ENCODE measurements at regions of chr4 and their contacts with region 1.

Region 1: GRCh38 chr4:77240469-77241066 is 83.6 kb downstream of the CCNG2 start:
- DNase-seq: peak; percentile 51
- ATAC-seq: peak; percentile 98
- H3K4me3 ChIP-seq: no peak overlapping the region
- H3K27ac ChIP-seq: no peak overlapping the region
- H3K4me1 ChIP-seq: no peaks in the 10 kb centered on the region
- H3K27me3 ChIP-seq: peaks cover 51% of the 10 kb centered on the region
- CTCF ChIP-seq: peak; percentile 81 to 95 (median 85)
- POLR2A ChIP-seq: no peak
- RAD21 ChIP-seq: peak; percentile 88

Region 2: DNA sequence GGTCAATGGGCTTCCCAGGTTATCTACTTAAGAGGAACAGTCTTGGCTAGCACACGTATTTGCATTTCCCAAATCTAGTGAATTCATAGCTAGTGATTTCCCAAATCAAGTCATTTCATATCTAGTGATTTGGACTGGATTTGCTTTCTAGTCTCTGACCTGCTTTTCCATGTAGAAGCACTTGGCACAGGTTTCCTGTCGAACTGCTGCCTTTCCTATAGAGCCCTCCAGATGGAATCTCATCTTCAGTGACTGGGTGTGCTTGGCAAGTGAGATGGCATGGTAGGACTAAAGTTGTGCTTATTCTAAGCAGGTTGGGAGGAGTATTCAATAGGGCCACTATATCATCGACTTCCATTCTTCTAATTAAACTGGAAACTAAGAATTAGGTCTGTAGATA is 11.2 kb after region 1 on chr4:
- CTCF ChIA-PET with region 1: no interaction called
- POLR2A ChIA-PET with region 1: no interaction called
- RAD21 ChIA-PET with region 1: no interaction called
- intact Hi-C with region 1: no loop called
- DNase-seq: no peak
- ATAC-seq: no peak
- H3K4me3 ChIP-seq: no peak overlapping the region
- H3K27ac ChIP-seq: no peak overlapping the region
- H3K4me1 ChIP-seq: no peaks in the 10 kb centered on the region
- H3K27me3 ChIP-seq: peaks cover 26% of the 10 kb centered on the region; the same call in 1 of the 2 replicates
- CTCF ChIP-seq: no peak
- POLR2A ChIP-seq: no peak
- RAD21 ChIP-seq: no peak

Region 3: GRCh38 chr4:77308843-77309242 is 68.3 kb after region 1 on chr4:
- CTCF ChIA-PET with region 1: interaction called, 5 read pairs
- POLR2A ChIA-PET with region 1: no interaction called
- RAD21 ChIA-PET with region 1: interaction called in 1 of 2 experiments, 6 read pairs
- intact Hi-C with region 1: loop called (anchors 1 kb)
- DNase-seq: peak; percentile 10
- ATAC-seq: peak; percentile 97
- H3K4me3 ChIP-seq: no peak overlapping the region
- H3K27ac ChIP-seq: no peak overlapping the region
- H3K4me1 ChIP-seq: no peaks in the 10 kb centered on the region
- H3K27me3 ChIP-seq: peaks cover 23% of the 10 kb centered on the region
- CTCF ChIP-seq: peak; percentile 53 to 62 (median 56); a peak in 4 of 6 replicates
- POLR2A ChIP-seq: no peak
- RAD21 ChIP-seq: peak; percentile 74

Region 4: GRCh38 chr4:77358315-77358928 is 117.9 kb after region 1 on chr4:
- CTCF ChIA-PET with region 1: interaction called, 14 read pairs
- POLR2A ChIA-PET with region 1: no interaction called
- RAD21 ChIA-PET with region 1: interaction called in 1 of 2 experiments, 7 read pairs
- intact Hi-C with region 1: loop called (anchors 1 kb)
- DNase-seq: peak; percentile 16
- ATAC-seq: peak; percentile 79
- H3K4me3 ChIP-seq: no peak overlapping the region
- H3K27ac ChIP-seq: no peak overlapping the region
- H3K4me1 ChIP-seq: no peaks in the 10 kb centered on the region
- H3K27me3 ChIP-seq: peaks cover 13% of the 10 kb centered on the region; the same call in 1 of the 2 replicates
- CTCF ChIP-seq: peak; percentile 47 to 70 (median 66); a peak in 5 of 6 replicates
- POLR2A ChIP-seq: no peak
- RAD21 ChIP-seq: peak; percentile 64

Region 5: GRCh38 chr4:77433418-77433733 is 192.8 kb after region 1 on chr4:
- CTCF ChIA-PET with region 1: no interaction called
- POLR2A ChIA-PET with region 1: no interaction called
- RAD21 ChIA-PET with region 1: no interaction called
- intact Hi-C with region 1: loop called (anchors 1 kb)
- DNase-seq: peak; percentile 42
- ATAC-seq: peak; percentile 85
- H3K4me3 ChIP-seq: no peak overlapping the region
- H3K27ac ChIP-seq: no peak overlapping the region
- H3K4me1 ChIP-seq: peaks cover 0 to 4% of the 10 kb centered on the region in 2 experiments; a peak in 2 of 4 replicates
- H3K27me3 ChIP-seq: 0 out of 2 replicates have a peak, but pooled peaks cover 5% of the 10 kb centered on the region
- CTCF ChIP-seq: peak; percentile 49 to 68 (median 59); a peak in 5 of 6 replicates
- POLR2A ChIP-seq: no peak
- RAD21 ChIP-seq: peak; percentile 75